ENCODE measurements at regions of chr16 and their contacts with region 1.

Region 1: GRCh38 chr16:30602616-30603277 is 7.4 kb downstream of the ZNF689 start:
- DNase-seq: no peak
- ATAC-seq: no peak
- H3K4me3 Mint-ChIP-seq: no peak overlapping the region
- H3K27ac Mint-ChIP-seq: no peak overlapping the region
- H3K4me1 Mint-ChIP-seq: peaks cover 7% of the 10 kb centered on the region
- H3K27me3 Mint-ChIP-seq: no peaks in the 10 kb centered on the region

Region 2: DNA sequence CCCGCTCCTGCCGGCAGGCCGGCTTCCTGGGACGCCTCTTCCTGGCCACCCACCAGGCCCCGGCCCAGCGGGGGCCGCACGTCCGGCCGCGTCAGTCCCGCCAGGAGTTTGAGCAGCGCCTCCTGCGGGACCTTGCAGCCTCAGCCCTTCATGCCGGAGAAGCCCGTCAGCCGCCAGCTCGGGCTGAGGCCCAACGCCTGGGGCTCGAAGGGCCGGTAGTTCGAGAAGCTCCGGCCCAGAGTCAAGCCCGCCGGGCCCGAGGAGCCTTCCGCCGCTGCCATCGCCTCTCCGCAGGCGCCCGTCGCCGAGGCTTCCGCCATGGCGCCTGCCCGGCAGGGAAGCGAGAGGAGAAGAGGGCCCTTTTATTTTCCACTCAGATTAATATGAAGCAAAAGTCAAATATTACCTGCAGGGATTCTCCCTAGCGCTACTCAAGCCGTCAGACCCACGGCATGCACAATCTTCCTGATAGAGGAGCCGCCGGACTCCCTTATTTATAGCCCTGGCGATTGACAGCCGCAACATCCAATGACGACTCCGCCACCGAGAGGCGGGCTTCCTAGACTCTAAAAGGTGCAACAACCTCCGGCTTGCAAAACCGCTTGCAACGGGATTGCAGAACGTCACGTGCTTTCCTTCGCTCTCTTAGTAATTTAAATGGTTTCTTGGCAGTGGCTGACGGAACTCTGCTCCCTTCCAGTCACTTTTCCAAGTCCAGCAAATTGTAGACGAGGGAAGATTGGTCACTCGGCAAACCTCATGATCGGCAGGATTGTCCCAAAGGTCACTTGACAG is 157.1 kb before region 1 on chr16 and contains the start of gene SEPHS2:
- CTCF ChIA-PET with region 1: interaction called, 9 read pairs
- POLR2A ChIA-PET with region 1: interaction called, 3 read pairs
- intact Hi-C with region 1: loop called in 1 of 2 experiments (anchors 1 kb)
- DNase-seq: peak; percentile 98
- ATAC-seq: peak; percentile 98
- H3K4me3 Mint-ChIP-seq: peak within 1 kb of the TSS; percentile 86
- H3K27ac Mint-ChIP-seq: peak within 1 kb of the TSS; percentile 93
- H3K4me1 Mint-ChIP-seq: peaks cover 35% of the 10 kb centered on the region
- H3K27me3 Mint-ChIP-seq: no peaks in the 10 kb centered on the region
- total RNA-seq, gene SEPHS2: 37.8 to 56.0 TPM

Region 3: GRCh38 chr16:30472328-30472942 is 130.3 kb before region 1 on chr16 and contains the start of gene ITGAL:
- CTCF ChIA-PET with region 1: interaction called, 4 read pairs
- POLR2A ChIA-PET with region 1: no interaction called
- intact Hi-C with region 1: loop called in 1 of 2 experiments (anchors 5 kb)
- DNase-seq: peak; percentile 93
- ATAC-seq: peak; percentile 62
- H3K4me3 Mint-ChIP-seq: peak within 1 kb of the TSS; percentile 95
- H3K27ac Mint-ChIP-seq: peak within 1 kb of the TSS; percentile 99
- H3K4me1 Mint-ChIP-seq: peaks cover 63% of the 10 kb centered on the region
- H3K27me3 Mint-ChIP-seq: no peaks in the 10 kb centered on the region
- total RNA-seq, gene ITGAL: 210 to 222 TPM

Region 4: DNA sequence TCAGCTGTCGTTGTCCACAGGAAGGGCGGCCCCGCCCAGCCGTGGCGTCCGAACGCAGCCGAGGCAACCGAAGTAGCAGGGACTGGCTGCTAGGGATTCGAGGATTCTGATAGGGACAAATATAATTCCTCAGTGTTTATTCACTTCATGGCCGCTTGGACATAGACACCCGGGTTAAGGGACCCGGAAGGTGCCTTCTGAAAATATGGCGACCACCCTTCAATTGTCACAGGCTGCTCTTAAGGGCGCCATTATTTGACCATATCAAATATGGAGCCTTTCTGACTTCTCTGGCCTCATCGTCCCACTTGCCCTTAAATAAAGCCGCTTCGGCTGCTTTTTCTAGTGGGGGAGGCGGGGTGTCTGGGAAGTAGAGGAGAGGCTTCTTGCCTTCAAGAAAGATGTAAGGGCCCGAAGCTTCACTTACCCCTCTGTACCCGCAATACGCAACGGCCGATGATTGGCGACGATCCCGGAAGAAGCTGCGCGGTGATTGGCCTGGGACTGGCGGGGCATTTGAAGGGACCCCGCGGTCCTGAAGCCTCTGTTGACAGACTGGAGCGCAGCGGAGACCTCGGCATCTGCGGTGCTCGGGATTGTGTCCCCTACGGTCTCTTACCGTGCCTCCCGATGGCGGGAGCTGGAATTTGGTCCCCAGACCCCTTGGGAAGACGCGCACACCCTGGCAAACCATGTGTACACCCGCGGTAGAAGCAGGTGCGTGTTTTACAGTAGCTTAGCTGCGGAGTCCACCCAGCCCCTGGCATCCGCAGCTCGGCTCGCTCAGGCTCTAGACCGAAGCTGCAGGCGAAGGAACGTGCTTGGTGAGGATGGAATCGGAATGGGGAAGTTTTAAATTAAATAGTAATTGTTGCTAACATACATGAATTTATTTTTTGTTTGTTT is 30.8 kb before region 1 on chr16 and contains the start of gene ZNF688:
- CTCF ChIA-PET with region 1: interaction called, 5 read pairs
- POLR2A ChIA-PET with region 1: interaction called, 9 read pairs
- intact Hi-C with region 1: loop called in 1 of 2 experiments (anchors 1 kb)
- DNase-seq: peak; percentile 95
- ATAC-seq: peak; percentile 79
- H3K4me3 Mint-ChIP-seq: peak within 1 kb of the TSS; percentile 87
- H3K27ac Mint-ChIP-seq: peak within 1 kb of the TSS; percentile 93
- H3K4me1 Mint-ChIP-seq: peaks cover 57% of the 10 kb centered on the region
- H3K27me3 Mint-ChIP-seq: no peaks in the 10 kb centered on the region
- total RNA-seq, gene ZNF688: 7.1 to 9.1 TPM

Region 5: DNA sequence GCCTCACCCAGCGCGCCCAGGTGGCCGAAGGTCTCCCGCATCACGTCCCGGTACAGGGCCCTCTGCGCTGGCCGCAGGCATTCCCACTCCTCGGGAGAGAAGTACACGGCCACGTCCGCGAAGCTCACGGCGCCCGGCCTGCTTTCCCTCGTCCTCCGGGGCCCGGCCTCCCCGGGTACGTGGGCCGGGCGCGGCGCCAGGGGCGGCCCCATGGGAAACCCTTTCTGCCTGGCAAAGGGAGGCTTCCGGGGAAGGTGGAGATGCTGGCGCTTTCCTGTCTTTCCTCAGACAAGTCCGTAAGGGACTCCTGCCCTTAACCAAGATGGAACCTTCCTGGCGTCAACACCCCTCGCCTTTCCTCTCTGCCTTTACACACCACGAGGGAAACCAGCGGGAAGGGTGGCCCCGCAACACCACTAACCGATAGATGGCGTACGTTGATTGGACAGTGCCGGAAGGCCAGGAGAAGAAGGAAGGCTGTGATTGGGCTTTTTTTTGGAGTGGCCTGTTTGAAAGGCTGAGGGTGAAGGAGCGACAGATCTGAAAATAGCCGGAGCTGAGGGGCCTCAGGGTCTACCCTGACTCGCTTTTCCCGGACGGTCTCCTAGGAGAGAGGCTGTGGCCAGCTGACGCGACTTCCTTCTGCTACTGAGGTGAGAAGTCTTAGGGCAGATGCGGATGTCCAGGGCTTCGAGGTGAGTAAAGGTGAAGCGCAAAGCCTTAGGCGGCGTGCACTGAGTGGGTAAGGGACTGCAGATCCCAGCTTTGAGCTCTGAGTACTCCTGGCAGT is 17.2 kb before region 1 on chr16 and contains the start of gene ZNF785:
- CTCF ChIA-PET with region 1: interaction called, 32 read pairs
- POLR2A ChIA-PET with region 1: no interaction called
- intact Hi-C with region 1: no loop called
- DNase-seq: peak; percentile 96
- ATAC-seq: peak; percentile 99
- H3K4me3 Mint-ChIP-seq: peak within 1 kb of the TSS; percentile 87
- H3K27ac Mint-ChIP-seq: peak within 1 kb of the TSS; percentile 92
- H3K4me1 Mint-ChIP-seq: peaks cover 37% of the 10 kb centered on the region
- H3K27me3 Mint-ChIP-seq: no peaks in the 10 kb centered on the region
- total RNA-seq, gene ZNF785: 9.2 to 10.8 TPM

Region 6: DNA sequence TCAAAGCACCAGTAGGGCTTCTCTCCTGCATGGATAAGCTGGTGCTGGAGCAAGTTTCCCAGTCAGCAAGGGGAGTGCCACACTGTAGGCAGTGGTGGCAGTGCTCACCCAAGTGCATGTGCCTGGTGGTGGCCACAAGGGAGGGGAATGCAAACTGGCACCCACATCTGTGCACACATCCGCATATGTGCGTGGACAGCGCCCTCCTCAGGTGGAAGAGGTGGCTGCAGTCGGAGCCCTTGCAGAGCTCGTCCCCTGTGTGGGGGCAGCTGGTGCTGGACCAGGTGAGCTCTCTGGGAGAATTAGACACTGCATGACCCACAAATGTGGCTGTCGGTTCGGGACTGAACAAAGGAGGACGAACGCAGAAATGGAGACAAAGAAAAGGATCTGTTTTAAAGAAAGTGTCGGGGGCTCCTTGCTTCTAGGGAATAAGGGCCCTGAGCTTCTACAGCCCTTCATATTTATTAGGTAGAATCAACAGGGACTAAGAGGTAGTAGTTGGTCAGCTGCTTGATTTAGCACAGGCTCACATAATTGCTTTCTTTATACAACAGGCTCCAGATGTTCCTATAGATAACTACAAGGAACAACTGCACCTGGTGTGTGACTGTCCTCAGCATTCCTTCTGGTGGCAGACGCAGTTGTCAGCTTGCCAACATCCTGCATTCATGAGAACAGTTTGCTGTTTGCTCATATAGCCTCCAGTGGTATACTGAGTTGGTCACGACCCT is 12.8 kb after region 1 on chr16:
- CTCF ChIA-PET with region 1: interaction called, 99 read pairs
- POLR2A ChIA-PET with region 1: no interaction called
- intact Hi-C with region 1: no loop called
- DNase-seq: peak; percentile 94
- ATAC-seq: peak; percentile 89
- H3K4me3 Mint-ChIP-seq: no peak overlapping the region
- H3K27ac Mint-ChIP-seq: no peak overlapping the region
- H3K4me1 Mint-ChIP-seq: peaks cover 4% of the 10 kb centered on the region
- H3K27me3 Mint-ChIP-seq: no peaks in the 10 kb centered on the region

Region 7: DNA sequence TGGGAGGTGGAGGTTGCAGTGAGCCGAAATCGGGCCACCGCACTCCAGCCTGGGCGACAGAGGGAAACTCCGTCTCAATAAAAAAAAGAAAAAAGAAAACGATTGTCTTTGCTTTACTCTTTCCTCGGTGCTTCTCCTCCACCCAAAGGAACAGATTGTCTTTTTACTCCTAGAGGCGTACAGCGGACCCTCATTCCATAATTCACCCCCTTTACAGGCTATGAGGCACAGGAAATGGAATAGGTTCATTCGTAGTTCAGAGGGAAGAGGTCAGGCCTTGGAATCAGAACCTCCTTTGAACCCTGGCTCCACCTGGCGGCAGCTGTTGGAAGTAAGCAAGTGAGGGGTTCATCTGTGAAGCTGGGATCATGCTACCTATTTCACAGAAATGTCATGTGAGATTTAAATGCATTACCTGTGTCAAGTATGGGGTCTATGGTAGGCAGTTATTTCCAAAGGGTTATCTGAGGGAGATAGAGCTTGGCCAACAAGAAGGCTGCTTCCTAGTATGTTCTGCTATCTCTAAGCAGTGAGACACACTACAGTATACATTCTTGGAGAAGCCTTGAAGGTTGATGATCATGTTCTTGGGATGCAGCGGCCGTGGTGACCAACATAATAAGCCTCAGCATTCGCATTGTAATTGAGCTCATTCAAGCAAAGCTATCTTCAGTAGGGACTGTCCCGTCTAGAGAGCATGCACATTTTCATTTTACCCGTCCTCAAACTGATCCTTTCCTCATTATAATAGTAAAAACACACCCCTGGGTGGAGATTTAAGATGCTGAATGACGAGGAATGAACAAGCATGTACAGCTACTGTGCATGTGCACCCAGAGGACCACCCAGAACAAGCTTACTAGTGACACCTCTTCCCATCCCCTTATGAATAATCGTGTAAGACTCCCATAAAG is 26.1 kb after region 1 on chr16:
- CTCF ChIA-PET with region 1: interaction called, 21 read pairs
- POLR2A ChIA-PET with region 1: no interaction called
- intact Hi-C with region 1: no loop called
- DNase-seq: peak; percentile 95
- ATAC-seq: peak; percentile 93
- H3K4me3 Mint-ChIP-seq: peak overlapping the region; percentile 58
- H3K27ac Mint-ChIP-seq: peak overlapping the region; percentile 82
- H3K4me1 Mint-ChIP-seq: peaks cover 14% of the 10 kb centered on the region
- H3K27me3 Mint-ChIP-seq: no peaks in the 10 kb centered on the region

Measured in activated CD4-positive, alpha-beta T cell treated with anti-CD3 and anti-CD28 coated beads for 36 hours (primary cell).